Panc1 (cell line): ENCODE measurements at regions of chr21 and their contacts with region 1.

Region 1: DNA sequence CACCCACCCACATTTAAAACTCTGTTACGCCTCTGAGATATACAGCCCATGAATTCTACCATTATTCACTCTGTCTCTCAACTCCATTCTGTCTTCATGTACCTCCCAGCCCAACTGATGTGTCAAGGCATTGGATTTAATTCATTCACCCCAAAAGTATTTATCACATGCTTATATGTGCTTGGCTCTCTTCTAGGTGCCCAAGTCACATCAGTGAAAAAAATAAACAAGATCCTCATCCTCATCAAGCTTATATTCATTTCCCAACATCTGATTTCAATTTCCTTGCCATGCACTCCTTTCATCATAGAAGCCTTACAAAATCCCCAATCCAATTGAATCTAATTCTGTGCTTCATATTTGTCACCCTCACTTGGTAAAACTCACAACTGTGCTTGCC is 967.6 kb downstream of the LTN1 start:
- DNase-seq: no peak
- ATAC-seq: no peak
- H3K4me3 ChIP-seq: no peak overlapping the region
- H3K27ac ChIP-seq: no peak overlapping the region
- H3K4me1 ChIP-seq: no peaks in the 10 kb centered on the region
- H3K27me3 ChIP-seq: no peaks in the 10 kb centered on the region
- CTCF ChIP-seq: no peak

Region 2: GRCh38 chr21:27564684-27565301 is 460.3 kb before region 1 on chr21:
- CTCF ChIA-PET with region 1: interaction called, 10 read pairs
- POLR2A ChIA-PET with region 1: no interaction called
- in situ Hi-C with region 1: no loop called
- intact Hi-C with region 1: no loop called
- DNase-seq: no peak
- ATAC-seq: no peak
- H3K4me3 ChIP-seq: no peak overlapping the region
- H3K27ac ChIP-seq: no peak overlapping the region
- H3K4me1 ChIP-seq: no peaks in the 10 kb centered on the region
- H3K27me3 ChIP-seq: no peaks in the 10 kb centered on the region
- CTCF ChIP-seq: peak; percentile 53; the same call in 1 of the 2 replicates